ENCODE measurements at regions of chr2 and their contacts with region 1.

Region 1: DNA sequence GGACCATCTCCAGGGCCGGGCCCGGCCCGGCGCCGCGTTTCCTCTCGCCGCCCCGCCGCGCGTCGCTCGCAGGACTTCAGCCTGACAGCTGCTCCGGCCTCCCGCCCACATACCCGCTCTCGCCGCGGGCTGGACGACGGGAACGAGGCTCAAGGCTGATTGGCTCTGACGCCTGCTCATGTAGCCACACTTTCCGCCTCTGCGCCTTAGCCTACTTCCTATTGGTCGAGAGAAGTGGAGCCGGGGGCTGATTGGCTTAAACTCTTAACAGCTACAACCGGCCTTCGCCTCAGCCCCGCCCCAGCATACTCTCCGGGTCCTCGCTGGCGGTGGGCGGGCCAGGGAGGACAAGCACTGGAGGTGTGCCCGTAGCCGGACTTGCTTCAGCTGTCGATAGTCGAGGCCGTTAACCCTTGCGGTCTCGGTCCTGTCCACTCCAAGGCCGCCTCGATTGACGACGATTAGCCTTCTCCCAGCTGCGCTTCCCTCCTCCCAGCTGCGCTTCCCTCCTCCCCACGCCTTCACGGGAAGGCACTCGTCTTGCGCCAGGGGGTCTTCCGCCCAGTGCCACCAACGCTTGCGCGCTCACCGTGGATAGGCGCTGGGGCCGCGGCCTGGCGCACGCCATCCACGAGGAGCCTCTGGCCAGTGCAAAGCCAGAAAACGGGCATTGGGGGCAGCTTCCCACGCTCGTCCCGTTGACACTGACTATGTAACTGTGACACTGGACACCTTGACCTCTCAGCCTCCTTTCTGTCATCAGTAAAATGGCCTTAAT is at the start of gene PRADC1:
- DNase-seq: peak; percentile 73 to 95 (median 91)
- ATAC-seq: peak; percentile 89
- H3K4me3 ChIP-seq: peak within 1 kb of the TSS; percentile 90
- H3K4me3 Mint-ChIP-seq: peak within 1 kb of the TSS; percentile 88 to 100 (median 98)
- H3K27ac ChIP-seq: peak within 1 kb of the TSS; percentile 94
- H3K27ac Mint-ChIP-seq: peak within 1 kb of the TSS; percentile 77 to 96 (median 94)
- H3K4me1 ChIP-seq: peaks cover 15% of the 10 kb centered on the region in 2 donors
- H3K4me1 Mint-ChIP-seq: peaks cover 25 to 41% (median 37%) of the 10 kb centered on the region in 7 donors
- H3K27me3 ChIP-seq: no peaks in the 10 kb centered on the region
- H3K27me3 Mint-ChIP-seq: peaks cover 0 to 2% (median 0%) of the 10 kb centered on the region in 5 donors
- total RNA-seq, gene PRADC1: 4.3 to 8.8 (median 6.9) TPM

Region 2: DNA sequence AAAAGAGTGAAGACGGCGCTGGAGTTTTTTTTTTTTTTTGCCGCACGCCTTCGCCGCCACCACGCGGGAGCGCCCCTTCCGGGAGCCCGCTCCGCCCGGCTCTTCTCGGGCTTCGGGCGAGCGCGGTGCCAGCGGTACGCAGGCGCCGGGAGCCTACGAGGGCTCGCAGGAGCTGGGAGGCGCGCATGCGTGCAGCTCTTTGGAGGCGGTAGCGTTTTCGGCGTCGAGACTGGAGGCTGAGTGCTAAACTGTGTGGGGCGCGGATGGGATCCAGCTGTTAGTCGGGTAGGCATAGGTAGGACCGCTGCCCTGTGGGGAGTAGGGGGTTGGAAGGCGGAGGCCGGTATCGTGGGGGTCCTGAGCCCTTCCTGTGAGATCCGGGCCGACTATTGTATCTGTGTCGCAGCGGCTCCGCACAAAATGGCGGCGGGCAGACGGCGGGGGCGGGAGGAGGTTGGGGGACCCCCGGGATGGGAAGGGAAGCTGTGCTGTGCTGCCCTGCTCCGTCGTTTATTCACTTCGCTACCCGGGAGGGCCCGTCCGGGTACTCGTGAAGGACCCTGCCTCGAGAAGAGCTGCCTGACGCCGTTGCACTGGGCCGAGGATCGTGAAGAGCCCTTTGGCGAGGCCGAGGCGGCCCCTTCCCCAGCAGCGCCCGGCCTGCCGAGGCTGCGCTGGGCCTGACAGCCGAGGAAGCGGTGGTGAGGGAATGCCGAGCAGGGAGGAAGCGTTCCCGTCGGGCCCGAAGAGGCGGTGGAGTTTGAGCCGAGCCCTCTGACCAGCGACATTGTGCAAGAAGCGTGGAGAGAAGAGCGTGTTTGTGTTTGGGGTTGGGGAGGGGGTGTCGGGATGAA is 1901.5 kb before region 1 on chr2 and contains the start of gene ZNF638:
- CTCF ChIA-PET with region 1: no interaction called
- POLR2A ChIA-PET with region 1: no interaction called
- intact Hi-C with region 1: loop called in 1 of 2 experiments (anchors 5 kb)
- DNase-seq: peak; percentile 89 to 94 (median 93)
- ATAC-seq: peak; percentile 98
- H3K4me3 ChIP-seq: peak within 1 kb of the TSS; percentile 79
- H3K4me3 Mint-ChIP-seq: peak within 1 kb of the TSS; percentile 95 to 100 (median 99)
- H3K27ac ChIP-seq: peak within 1 kb of the TSS; percentile 99
- H3K27ac Mint-ChIP-seq: peak within 1 kb of the TSS; percentile 97 to 100 (median 100)
- H3K4me1 ChIP-seq: peaks cover 25 to 29% of the 10 kb centered on the region in 2 donors
- H3K4me1 Mint-ChIP-seq: peaks cover 19 to 56% (median 40%) of the 10 kb centered on the region in 7 donors
- H3K27me3 ChIP-seq: no peaks in the 10 kb centered on the region
- H3K27me3 Mint-ChIP-seq: peaks cover 0 to 20% (median 5%) of the 10 kb centered on the region in 5 donors
- total RNA-seq, gene ZNF638: 113 to 204 (median 121) TPM

Region 3: DNA sequence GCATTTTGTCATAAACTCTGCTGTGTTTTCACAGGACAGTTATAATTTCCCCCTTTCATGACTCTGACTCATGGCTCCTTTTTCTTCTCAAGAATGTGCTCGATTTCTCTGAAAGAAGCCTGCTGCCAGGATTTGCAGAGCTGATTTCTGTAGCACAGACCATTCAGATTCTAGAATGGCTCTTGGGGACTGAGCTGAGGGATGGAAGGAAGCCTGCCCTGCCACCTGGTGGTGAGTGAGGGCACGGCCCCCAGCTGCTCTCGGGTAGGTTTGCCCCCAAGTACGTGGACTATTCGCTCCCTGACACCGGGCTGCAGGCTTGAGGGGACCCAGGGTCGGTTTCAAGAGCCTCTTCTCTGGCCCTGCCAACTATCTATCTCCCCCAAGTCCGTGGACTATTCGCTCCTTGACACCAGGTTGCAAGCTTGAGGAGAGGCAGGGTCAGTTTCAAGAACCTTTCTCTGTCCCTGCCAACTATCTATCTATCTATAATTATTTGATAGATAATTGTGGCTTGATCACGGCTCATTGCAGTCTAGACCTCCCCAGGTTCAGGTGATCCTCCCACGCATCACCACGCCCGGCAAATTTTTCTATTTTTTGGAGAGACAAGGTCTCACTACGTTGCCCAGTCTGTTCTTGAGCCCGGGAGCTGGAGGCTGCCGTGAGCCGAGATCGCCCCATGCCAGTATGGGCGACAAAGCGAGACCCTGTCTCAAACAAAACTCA is 20.7 kb before region 1 on chr2:
- CTCF ChIA-PET with region 1: interaction called, 6 read pairs
- POLR2A ChIA-PET with region 1: interaction called, 34 read pairs
- intact Hi-C with region 1: loop called (anchors 1 kb)
- DNase-seq: peak; percentile 48 to 71 (median 64)
- ATAC-seq: peak; percentile 76
- H3K4me3 ChIP-seq: no peak overlapping the region
- H3K4me3 Mint-ChIP-seq: peak overlapping the region in 8 of 10 donors; percentile 15 to 97 (median 62)
- H3K27ac ChIP-seq: no peak overlapping the region
- H3K27ac Mint-ChIP-seq: peak overlapping the region in 6 of 9 donors; percentile 40 to 98 (median 91)
- H3K4me1 ChIP-seq: peaks cover 14 to 18% of the 10 kb centered on the region in 2 donors
- H3K4me1 Mint-ChIP-seq: peaks cover 16 to 44% (median 36%) of the 10 kb centered on the region in 7 donors
- H3K27me3 ChIP-seq: no peaks in the 10 kb centered on the region
- H3K27me3 Mint-ChIP-seq: peaks cover 4 to 8% (median 7%) of the 10 kb centered on the region in 5 donors

Region 4: DNA sequence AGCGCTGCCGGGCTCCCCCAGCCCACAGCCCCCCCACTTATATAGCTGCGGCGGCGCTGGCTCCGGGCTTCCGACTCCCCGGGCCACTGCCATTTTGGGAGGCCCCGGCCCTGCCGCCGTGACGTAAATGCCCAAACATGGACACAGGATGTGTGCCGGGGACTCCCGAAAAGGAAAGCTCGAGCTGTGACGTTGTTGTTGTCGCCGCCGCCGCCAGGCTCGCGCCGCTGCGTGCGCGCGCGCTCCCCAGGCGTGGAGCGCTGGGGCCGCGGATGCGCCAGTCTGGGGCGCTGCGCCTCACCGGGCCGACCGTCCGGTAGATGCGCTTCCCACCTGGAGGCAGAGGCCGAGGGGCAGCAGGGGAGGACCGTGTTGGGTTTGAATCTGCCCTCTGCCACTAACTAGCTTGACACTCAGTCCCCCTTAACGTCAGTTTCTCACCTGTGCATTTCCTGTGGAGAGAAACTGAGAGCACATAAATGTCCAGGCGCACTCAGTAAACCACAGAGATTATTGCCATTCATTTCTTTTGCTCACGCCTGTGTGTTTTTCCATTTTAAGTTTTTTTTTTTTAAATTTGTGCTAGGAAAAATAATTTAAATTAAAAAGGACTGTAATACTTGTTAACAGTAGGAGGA is 60.3 kb after region 1 on chr2 and contains the start of gene EGR4:
- CTCF ChIA-PET with region 1: interaction called, 6 read pairs
- POLR2A ChIA-PET with region 1: interaction called, 25 read pairs
- intact Hi-C with region 1: loop called (anchors 1 kb)
- DNase-seq: peak; percentile 70 to 96 (median 88)
- ATAC-seq: peak; percentile 94
- H3K4me3 ChIP-seq: peak within 1 kb of the TSS; percentile 72
- H3K4me3 Mint-ChIP-seq: peak within 1 kb of the TSS; percentile 59 to 82 (median 72)
- H3K27ac ChIP-seq: no peak within 1 kb of the TSS
- H3K27ac Mint-ChIP-seq: peak within 1 kb of the TSS in 4 of 9 donors; percentile 9 to 81 (median 30)
- H3K4me1 ChIP-seq: peaks cover 17 to 18% of the 10 kb centered on the region in 2 donors
- H3K4me1 Mint-ChIP-seq: peaks cover 7 to 25% (median 14%) of the 10 kb centered on the region in 7 donors
- H3K27me3 ChIP-seq: peaks cover 11 to 25% of the 10 kb centered on the region in 2 donors
- H3K27me3 Mint-ChIP-seq: peaks cover 48 to 83% (median 66%) of the 10 kb centered on the region in 5 donors
- total RNA-seq, gene EGR4: 0.15 to 0.16 (median 0.15) TPM in 3 of 5 experiments, not detected in the others

Region 5: GRCh38 chr2:74119912-74120825 is 886.8 kb after region 1 on chr2:
- CTCF ChIA-PET with region 1: no interaction called
- POLR2A ChIA-PET with region 1: no interaction called
- intact Hi-C with region 1: loop called in 1 of 2 experiments (anchors 1 kb)
- DNase-seq: peak; percentile 69 to 91 (median 80)
- ATAC-seq: peak; percentile 98
- H3K4me3 ChIP-seq: peak overlapping the region; percentile 89
- H3K4me3 Mint-ChIP-seq: peak overlapping the region; percentile 82 to 92 (median 88)
- H3K27ac ChIP-seq: peak overlapping the region; percentile 83
- H3K27ac Mint-ChIP-seq: peak overlapping the region; percentile 79 to 96 (median 91)
- H3K4me1 ChIP-seq: no peaks in the 10 kb centered on the region
- H3K4me1 Mint-ChIP-seq: peaks cover 8 to 12% (median 9%) of the 10 kb centered on the region in 7 donors
- H3K27me3 ChIP-seq: no peaks in the 10 kb centered on the region
- H3K27me3 Mint-ChIP-seq: peaks cover 0 to 5% (median 2%) of the 10 kb centered on the region in 5 donors

Region 6: GRCh38 chr2:74529357-74530238 is 1296.3 kb after region 1 on chr2 and contains the starts of genes AUP1 and HTRA2:
- CTCF ChIA-PET with region 1: no interaction called
- POLR2A ChIA-PET with region 1: no interaction called
- intact Hi-C with region 1: loop called in 1 of 2 experiments (anchors 5 kb)
- DNase-seq: peak; percentile 75 to 92 (median 83)
- ATAC-seq: peak; percentile 90
- H3K4me3 ChIP-seq: peak within 1 kb of the TSS; percentile 94
- H3K4me3 Mint-ChIP-seq: peak within 1 kb of the TSS; percentile 91 to 98 (median 94)
- H3K27ac ChIP-seq: peak within 1 kb of the TSS; percentile 85
- H3K27ac Mint-ChIP-seq: peak within 1 kb of the TSS; percentile 88 to 97 (median 93)
- H3K4me1 ChIP-seq: peaks cover 11 to 25% of the 10 kb centered on the region in 2 donors
- H3K4me1 Mint-ChIP-seq: peaks cover 25 to 50% (median 43%) of the 10 kb centered on the region in 7 donors
- H3K27me3 ChIP-seq: no peaks in the 10 kb centered on the region
- H3K27me3 Mint-ChIP-seq: no peaks in the 10 kb centered on the region
- total RNA-seq, gene AUP1: 121 to 160 (median 144) TPM
- total RNA-seq, gene HTRA2: 16.9 to 46.2 (median 37.7) TPM